ENCODE measurements at regions of chr11 and their contacts with region 1.

Region 1: GRCh38 chr11:5624489-5625279 is at the start of gene TRIM34:
- DNase-seq: peak in 1 of 2 donors; percentile 69
- H3K4me3 ChIP-seq: peak within 1 kb of the TSS; percentile 62 to 68
- H3K27ac ChIP-seq: peak within 1 kb of the TSS in 1 of 2 donors; percentile 50
- H3K4me1 ChIP-seq: peaks cover 0 to 24% of the 10 kb centered on the region in 2 donors
- H3K27me3 ChIP-seq: no peaks in the 10 kb centered on the region
- CTCF ChIP-seq: no peak
- total RNA-seq, gene TRIM34: not detected

Region 2: GRCh38 chr11:5369793-5370192 is 254.9 kb before region 1 on chr11:
- intact Hi-C with region 1: no loop called
- DNase-seq: no peak
- H3K4me3 ChIP-seq: no peak overlapping the region
- H3K27ac ChIP-seq: no peak overlapping the region
- H3K4me1 ChIP-seq: peaks cover 0 to 3% of the 10 kb centered on the region in 2 donors
- H3K27me3 ChIP-seq: no peaks in the 10 kb centered on the region
- CTCF ChIP-seq: no peak

Region 3: GRCh38 chr11:5600374-5600851 is 24.3 kb before region 1 on chr11:
- intact Hi-C with region 1: loop called (anchors 2 kb)
- DNase-seq: peak in 1 of 2 donors; percentile 87
- H3K4me3 ChIP-seq: no peak overlapping the region
- H3K27ac ChIP-seq: peak overlapping the region; percentile 68 to 79
- H3K4me1 ChIP-seq: peaks cover 5% of the 10 kb centered on the region in 2 donors
- H3K27me3 ChIP-seq: no peaks in the 10 kb centered on the region
- CTCF ChIP-seq: peak; percentile 35 to 86 (median 67)